H1 (cell line): ENCODE measurements at regions of chr14 and their contacts with region 1.

Region 1: GRCh38 chr14:51566831-51567582 is 84.7 kb upstream of the FRMD6 start:
- DNase-seq: no peak
- H3K4me3 ChIP-seq: no peak overlapping the region
- H3K27ac ChIP-seq: no peak overlapping the region
- H3K4me1 ChIP-seq: no peaks in the 10 kb centered on the region; a peak in 1 of 7 replicates
- H3K27me3 ChIP-seq: no peaks in the 10 kb centered on the region
- CTCF ChIP-seq: no peak
- EP300 ChIP-seq: no peak
- POLR2A ChIP-seq: no peak
- RAD21 ChIP-seq: no peak

Region 2: DNA sequence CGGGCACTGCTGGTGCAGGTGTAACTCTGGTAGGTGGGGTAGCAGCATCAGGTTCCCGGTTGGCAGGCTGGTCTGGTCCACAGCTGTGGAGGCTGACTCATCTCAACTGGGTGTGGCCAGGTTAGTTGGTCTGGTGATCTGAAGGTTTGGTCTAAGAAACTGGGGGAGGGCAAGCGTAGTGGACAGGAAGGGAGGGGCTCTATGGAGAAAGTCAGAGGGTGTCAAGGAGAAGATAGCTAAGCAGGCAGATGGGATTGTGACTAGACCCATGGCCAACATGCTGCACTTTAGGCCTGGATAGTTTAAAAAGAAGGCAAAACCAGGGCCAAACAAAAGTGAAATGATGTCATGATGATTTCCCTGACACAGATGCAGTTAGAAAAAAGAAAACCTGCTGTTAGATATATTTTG is 480.0 kb before region 1 on chr14:
- CTCF ChIA-PET with region 1: no interaction called
- POLR2A ChIA-PET with region 1: no interaction called
- DNase-seq: no peak
- H3K4me3 ChIP-seq: no peak overlapping the region
- H3K27ac ChIP-seq: no peak overlapping the region
- H3K4me1 ChIP-seq: peaks cover 0 to 4% (median 2%) of the 10 kb centered on the region in 4 experiments; a peak in 2 of 7 replicates
- H3K27me3 ChIP-seq: no peaks in the 10 kb centered on the region; a peak in 1 of 7 replicates
- CTCF ChIP-seq: no peak
- EP300 ChIP-seq: no peak
- POLR2A ChIP-seq: no peak
- RAD21 ChIP-seq: 0 out of 4 replicates have a peak, but pooled peaks of 1 of the 2 experiments have one; percentile 5

Region 3: DNA sequence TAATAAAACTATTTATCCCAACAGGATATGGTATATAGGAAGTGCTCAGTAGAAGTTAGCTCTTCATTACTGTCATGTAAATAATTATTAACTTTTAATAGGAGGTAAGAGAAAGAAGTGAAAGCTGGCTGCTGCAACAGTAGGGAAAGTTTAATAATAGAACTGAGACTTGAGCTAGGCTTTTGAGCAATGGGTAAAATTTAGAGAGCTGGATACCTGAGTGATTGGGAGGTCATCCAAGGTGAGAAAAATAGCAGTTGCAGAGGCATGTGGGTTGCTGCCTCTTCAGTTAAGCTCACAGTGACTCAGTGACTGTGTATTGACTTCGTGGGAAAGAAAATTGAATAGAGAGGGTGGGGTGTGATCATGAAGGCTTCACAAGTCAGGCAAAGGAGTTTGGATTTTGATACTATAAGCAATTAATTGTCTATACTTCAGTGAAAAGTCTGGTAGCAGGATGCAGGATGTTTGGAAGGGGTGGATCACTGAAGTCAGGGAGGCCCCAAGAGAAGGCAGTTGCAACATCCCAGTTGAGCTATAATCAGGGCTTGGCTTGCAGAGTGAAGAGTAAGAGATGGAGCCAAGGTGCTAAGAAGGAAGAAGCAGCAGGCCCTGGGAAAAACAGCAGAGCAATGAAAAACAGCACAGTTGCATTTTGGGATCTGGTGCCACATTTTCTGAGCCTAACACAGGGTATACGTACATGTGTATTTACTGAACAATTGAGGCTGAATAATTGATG is 87.3 kb before region 1 on chr14:
- CTCF ChIA-PET with region 1: no interaction called
- POLR2A ChIA-PET with region 1: no interaction called
- DNase-seq: no peak
- H3K4me3 ChIP-seq: no peak overlapping the region
- H3K27ac ChIP-seq: no peak overlapping the region
- H3K4me1 ChIP-seq: no peaks in the 10 kb centered on the region
- H3K27me3 ChIP-seq: no peaks in the 10 kb centered on the region
- CTCF ChIP-seq: no peak
- EP300 ChIP-seq: no peak
- POLR2A ChIP-seq: no peak
- RAD21 ChIP-seq: no peak

Region 4: GRCh38 chr14:51552765-51553404 is 14.1 kb before region 1 on chr14:
- CTCF ChIA-PET with region 1: interaction called, 14 read pairs
- POLR2A ChIA-PET with region 1: no interaction called
- DNase-seq: no peak
- H3K4me3 ChIP-seq: no peak overlapping the region
- H3K27ac ChIP-seq: no peak overlapping the region
- H3K4me1 ChIP-seq: no peaks in the 10 kb centered on the region
- H3K27me3 ChIP-seq: no peaks in the 10 kb centered on the region
- CTCF ChIP-seq: no peak
- EP300 ChIP-seq: no peak
- POLR2A ChIP-seq: no peak
- RAD21 ChIP-seq: no peak